Right lobe of liver (tissue), 6 donors: ENCODE measurements at regions of chr4 and their contacts with region 1.

Region 1: GRCh38 chr4:51906167-51906958 is 63.4 kb downstream of the DCUN1D4 start:
- DNase-seq: no peak
- ATAC-seq: peak in 1 of 4 donors; percentile 34
- H3K4me3 ChIP-seq: no peak overlapping the region
- H3K27ac ChIP-seq: peak overlapping the region in 1 of 3 donors; percentile 80
- H3K4me1 ChIP-seq: peaks cover 0 to 34% (median 14%) of the 10 kb centered on the region in 4 donors
- H3K27me3 ChIP-seq: no peaks in the 10 kb centered on the region
- CTCF ChIP-seq: no peak
- POLR2A ChIP-seq: no peak

Region 2: GRCh38 chr4:52028969-52029368 is 122.6 kb after region 1 on chr4:
- intact Hi-C with region 1: loop called in 1 of 2 experiments (anchors 10 kb)
- DNase-seq: no peak
- ATAC-seq: no peak
- H3K4me3 ChIP-seq: no peak overlapping the region
- H3K27ac ChIP-seq: no peak overlapping the region
- H3K4me1 ChIP-seq: no peaks in the 10 kb centered on the region
- H3K27me3 ChIP-seq: no peaks in the 10 kb centered on the region
- CTCF ChIP-seq: no peak
- POLR2A ChIP-seq: no peak